ENCODE measurements at regions of chr4 and their contacts with region 1.

Region 1: DNA sequence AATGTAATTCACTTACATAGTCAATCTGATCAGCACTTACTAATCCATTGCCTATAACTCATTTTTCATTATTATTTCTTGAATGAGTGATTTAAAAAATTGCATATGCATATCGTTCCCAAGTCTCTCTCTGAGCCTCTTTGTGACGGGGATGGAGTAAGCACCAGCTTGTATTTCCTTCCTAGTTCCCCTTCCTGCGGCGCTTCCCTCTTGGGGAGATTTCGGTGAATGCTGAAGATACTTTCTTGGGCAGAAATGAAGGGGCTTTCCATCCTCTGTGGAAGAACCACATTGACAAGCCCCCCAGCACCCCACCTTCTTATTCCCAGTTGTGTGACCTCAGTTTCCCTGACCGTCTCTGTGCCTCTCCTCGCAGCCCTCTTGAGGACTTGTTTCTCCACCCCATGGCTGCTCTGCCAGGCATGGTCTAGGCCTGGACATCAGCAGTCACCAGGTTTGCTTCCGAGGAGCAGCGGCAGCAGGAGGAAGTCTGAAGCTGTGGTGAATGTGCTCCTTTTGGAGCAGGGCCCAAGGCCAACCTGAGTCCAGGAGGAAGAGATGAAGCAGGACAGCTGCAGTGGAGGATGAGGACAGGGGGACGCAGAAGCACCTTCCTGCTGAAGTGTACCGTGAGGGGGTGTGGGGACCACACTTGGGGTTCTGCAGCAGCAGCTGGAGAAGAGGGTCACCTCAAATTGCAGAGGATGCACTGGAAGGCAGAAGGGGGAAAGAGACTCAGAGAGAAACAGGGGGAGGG is 124.9 kb downstream of the IRF2 start:
- DNase-seq: no peak
- CTCF ChIP-seq: no peak

Region 2: GRCh38 chr4:184384056-184384809 is 34.8 kb after region 1 on chr4:
- CTCF ChIA-PET with region 1: interaction called, 15 read pairs
- POLR2A ChIA-PET with region 1: interaction called, 3 read pairs
- DNase-seq: peak; percentile 46
- CTCF ChIP-seq: no peak

Measured in GM10248 (cell line).